Lower leg skin (tissue), 4 donors: ENCODE measurements at regions of chr10 and their contacts with region 1.

Region 1: GRCh38 chr10:35124540-35124939 is 2.1 kb upstream of the CREM start:
- DNase-seq: no peak
- H3K4me3 ChIP-seq: no peak overlapping the region
- CTCF ChIP-seq: no peak
- POLR2A ChIP-seq: no peak

Region 2: DNA sequence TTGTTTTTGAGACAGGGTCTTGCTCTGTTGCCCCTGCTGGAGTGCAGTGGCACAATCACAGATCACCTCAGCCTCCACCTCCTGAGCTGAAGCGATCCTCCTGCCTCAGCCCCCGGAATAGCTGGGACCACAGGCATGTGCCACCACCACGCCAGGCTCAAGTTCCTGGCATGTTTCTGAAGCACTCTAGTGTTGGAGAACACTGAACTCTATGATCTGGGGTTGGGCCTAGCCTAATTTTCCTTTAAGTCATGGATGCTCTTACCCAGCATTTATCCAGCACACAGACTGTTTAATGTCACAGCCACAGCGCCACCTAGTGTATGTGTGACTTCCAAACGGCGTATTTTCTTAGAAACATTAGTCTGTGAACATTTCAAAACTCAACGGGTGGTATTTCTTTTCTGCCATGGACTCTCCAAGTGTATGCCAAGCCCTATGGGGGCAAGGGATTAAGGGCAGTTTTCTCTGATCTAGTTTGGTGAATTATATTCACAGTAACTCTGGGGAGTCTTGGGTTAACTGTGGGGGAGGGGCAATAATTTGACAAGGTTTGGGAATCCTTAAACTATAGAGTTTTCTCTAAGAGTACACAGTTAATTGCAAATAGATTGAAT is 93.9 kb after region 1 on chr10:
- intact Hi-C with region 1: loop called (anchors 5 kb)
- DNase-seq: peak; percentile 84 to 95
- H3K4me3 ChIP-seq: no peak overlapping the region
- CTCF ChIP-seq: peak in 1 of 3 donors; percentile 58
- POLR2A ChIP-seq: no peak